ENCODE measurements at regions of chr12 and their contacts with region 1.

Region 1: GRCh38 chr12:53675651-53676453 is at the start of gene ATP5MC2:
- DNase-seq: peak; percentile 98
- H3K4me3 Mint-ChIP-seq: peak within 1 kb of the TSS; percentile 81
- H3K27ac Mint-ChIP-seq: peak within 1 kb of the TSS; percentile 89
- H3K4me1 Mint-ChIP-seq: peaks cover 26% of the 10 kb centered on the region
- H3K27me3 Mint-ChIP-seq: peaks cover 19% of the 10 kb centered on the region
- total RNA-seq, gene ATP5MC2: 378 TPM

Region 2: DNA sequence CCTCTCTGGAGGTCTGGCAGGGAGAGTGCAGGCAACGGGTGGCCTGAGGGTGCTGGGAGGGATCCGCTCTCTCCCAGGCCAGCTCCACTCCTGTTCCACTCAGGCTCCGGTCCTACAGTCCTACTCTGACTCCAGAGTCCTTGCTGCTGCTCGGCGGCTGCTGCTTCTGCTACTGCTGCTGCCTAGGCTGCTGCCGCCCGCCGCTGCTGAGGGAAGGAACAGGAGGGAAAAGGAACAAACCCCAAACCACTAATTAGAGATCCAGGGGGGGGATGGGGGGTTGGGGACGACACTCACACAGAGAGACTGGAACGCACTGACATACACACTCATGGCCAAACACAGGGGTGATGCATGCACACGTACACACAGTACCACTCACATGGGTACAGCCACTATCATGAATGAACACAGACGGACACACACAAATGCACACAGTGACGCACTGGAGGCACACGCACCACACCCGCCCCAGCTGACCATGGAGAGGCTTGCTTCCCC is 339.6 kb before region 1 on chr12 and contains the start of gene SP7:
- CTCF ChIA-PET with region 1: no interaction called
- POLR2A ChIA-PET with region 1: no interaction called
- intact Hi-C with region 1: no loop called
- DNase-seq: no peak
- H3K4me3 Mint-ChIP-seq: no peak within 1 kb of the TSS
- H3K27ac Mint-ChIP-seq: no peak within 1 kb of the TSS
- H3K4me1 Mint-ChIP-seq: peaks cover 5% of the 10 kb centered on the region
- H3K27me3 Mint-ChIP-seq: peaks cover 32% of the 10 kb centered on the region
- total RNA-seq, gene SP7: not detected

Region 3: DNA sequence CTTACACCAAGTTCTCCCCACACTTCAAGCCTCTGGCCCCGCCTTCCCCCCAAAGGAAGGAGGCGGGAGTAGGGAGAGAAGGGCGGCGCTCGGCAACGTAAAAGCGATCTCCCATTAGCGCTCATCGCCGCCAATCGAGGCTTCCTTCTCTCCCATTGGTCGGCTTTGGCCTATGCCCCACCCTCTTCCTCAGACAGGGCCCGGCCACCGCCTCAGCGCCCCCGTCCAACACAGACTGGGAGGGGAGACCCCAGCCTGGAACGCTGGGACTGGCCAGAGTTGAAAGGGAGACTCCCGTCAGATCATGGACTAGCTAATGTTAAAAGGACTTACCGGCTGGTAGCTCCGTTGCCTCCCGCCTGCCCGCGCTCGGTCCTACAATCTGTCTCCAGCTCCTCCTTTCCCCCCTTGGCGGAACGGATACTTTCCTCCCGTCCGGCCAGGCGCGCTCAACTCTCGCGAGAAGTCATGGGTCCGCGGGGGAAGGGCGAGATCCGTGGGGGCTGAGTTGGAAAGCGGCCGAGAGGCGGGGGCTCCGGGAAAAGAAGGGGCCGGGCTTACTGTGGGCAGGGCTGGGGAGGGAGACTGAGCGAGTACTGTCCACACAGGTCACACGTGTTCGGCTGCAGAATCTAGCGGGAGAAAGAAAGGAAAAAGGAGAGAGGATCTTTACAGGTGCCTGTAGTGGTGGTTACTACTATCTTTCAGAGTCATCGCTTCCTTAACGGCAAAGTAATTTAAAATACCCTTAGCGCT is 49.7 kb before region 1 on chr12 and contains the start of gene ATF7:
- CTCF ChIA-PET with region 1: interaction called, 17 read pairs
- POLR2A ChIA-PET with region 1: interaction called, 3 read pairs
- intact Hi-C with region 1: loop called (anchors 1 kb)
- DNase-seq: peak; percentile 99
- H3K4me3 Mint-ChIP-seq: peak within 1 kb of the TSS; percentile 97
- H3K27ac Mint-ChIP-seq: peak within 1 kb of the TSS; percentile 94
- H3K4me1 Mint-ChIP-seq: peaks cover 43% of the 10 kb centered on the region
- H3K27me3 Mint-ChIP-seq: no peaks in the 10 kb centered on the region
- total RNA-seq, gene ATF7: 19.3 to 20.7 TPM

Region 4: DNA sequence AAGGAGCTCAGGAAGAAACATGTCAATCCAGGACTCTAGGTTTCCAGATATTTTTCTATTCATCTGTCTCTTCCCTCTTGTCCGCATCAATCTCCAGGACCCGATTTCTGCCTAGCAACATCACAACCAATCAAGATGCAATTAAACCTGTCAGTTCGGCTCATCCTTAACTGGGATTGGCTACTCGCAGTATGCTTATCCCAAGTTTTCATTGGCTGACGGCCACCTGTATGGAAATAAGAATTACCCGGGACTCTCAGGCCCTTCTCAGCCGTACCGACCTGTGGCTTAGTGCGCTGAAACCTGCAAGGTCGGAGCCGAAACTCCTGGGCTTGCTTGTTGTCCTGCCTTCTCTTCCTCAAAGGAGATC is 20.4 kb after region 1 on chr12:
- CTCF ChIA-PET with region 1: interaction called, 17 read pairs
- POLR2A ChIA-PET with region 1: no interaction called
- intact Hi-C with region 1: no loop called
- DNase-seq: no peak
- H3K4me3 Mint-ChIP-seq: peak overlapping the region; percentile 16
- H3K27ac Mint-ChIP-seq: no peak overlapping the region
- H3K4me1 Mint-ChIP-seq: peaks cover 29% of the 10 kb centered on the region
- H3K27me3 Mint-ChIP-seq: peaks cover 75% of the 10 kb centered on the region

Region 5: DNA sequence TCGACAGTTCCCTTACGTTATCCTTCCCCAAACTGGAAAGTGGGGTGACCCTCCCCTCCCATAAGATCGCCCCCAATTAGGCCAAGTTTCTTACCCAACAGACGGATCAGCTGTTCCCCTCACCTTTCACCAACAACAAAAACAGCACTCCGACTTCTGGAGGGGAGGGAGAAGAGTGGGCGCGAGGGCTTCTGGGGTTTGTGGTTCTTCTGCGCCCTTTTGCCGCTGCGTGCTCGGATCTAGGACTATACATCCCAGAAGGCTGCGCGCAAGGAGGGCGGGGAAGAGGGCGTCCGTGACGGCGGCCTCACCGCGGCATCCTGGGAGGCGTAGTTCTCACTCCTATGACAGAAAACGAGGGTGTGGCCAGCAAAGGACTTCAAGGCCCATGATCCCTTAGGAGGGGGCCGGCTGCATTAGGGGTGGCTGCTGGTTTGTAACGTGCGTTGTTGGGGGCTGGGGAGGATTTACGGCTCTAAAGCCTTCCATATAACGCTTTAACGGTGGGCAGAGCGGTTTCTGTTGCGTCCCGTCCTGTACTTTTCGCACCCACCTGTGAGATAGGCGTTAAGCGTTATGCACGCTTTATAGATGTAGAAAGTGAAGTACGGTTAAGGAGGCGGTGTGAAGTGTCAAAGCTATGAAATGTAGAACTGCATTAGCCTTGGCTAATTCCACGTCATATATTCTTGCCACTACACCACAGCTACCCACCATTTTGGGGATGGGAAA is 51.6 kb after region 1 on chr12 and contains the start of gene CALCOCO1:
- CTCF ChIA-PET with region 1: interaction called, 4 read pairs
- POLR2A ChIA-PET with region 1: interaction called, 10 read pairs
- intact Hi-C with region 1: loop called (anchors 1 kb)
- DNase-seq: peak; percentile 99
- H3K4me3 Mint-ChIP-seq: peak within 1 kb of the TSS; percentile 87
- H3K27ac Mint-ChIP-seq: peak within 1 kb of the TSS; percentile 77
- H3K4me1 Mint-ChIP-seq: peaks cover 19% of the 10 kb centered on the region
- H3K27me3 Mint-ChIP-seq: no peaks in the 10 kb centered on the region
- total RNA-seq, gene CALCOCO1: 21.2 to 23.7 TPM

Region 6: GRCh38 chr12:53766881-53767280 is 91.0 kb after region 1 on chr12:
- CTCF ChIA-PET with region 1: no interaction called
- POLR2A ChIA-PET with region 1: no interaction called
- intact Hi-C with region 1: no loop called
- DNase-seq: no peak
- H3K4me3 Mint-ChIP-seq: no peak overlapping the region
- H3K27ac Mint-ChIP-seq: no peak overlapping the region
- H3K4me1 Mint-ChIP-seq: no peaks in the 10 kb centered on the region
- H3K27me3 Mint-ChIP-seq: peaks cover 49% of the 10 kb centered on the region

Region 7: DNA sequence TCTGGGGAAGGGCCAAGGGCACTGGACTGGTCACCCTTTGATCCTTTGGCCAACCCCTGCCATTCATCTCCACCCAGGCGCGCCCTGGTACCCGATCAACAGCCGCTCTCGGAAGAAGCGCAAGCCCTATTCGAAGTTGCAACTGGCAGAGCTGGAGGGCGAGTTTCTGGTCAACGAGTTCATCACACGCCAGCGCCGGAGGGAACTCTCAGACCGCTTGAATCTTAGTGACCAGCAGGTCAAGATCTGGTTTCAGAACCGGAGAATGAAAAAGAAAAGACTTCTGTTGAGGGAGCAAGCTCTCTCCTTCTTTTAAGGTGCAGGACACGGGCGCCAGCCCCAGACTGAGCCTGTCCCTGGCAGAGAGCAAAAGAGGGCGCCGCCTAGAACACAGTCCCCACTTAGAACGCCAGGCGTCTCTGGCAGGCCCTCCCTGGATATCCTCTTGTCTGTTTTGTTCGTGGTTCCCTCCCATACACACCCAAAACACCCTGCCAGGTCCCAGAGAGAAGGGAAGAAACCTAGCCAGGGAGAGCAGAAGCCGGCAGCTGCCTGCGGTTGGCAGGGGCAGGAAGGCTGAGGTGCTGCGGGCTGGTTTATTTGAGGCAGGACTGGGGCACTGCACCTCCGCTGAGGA is 280.5 kb after region 1 on chr12:
- CTCF ChIA-PET with region 1: no interaction called
- POLR2A ChIA-PET with region 1: no interaction called
- intact Hi-C with region 1: no loop called
- DNase-seq: no peak
- H3K4me3 Mint-ChIP-seq: no peak overlapping the region
- H3K27ac Mint-ChIP-seq: no peak overlapping the region
- H3K4me1 Mint-ChIP-seq: peaks cover 20% of the 10 kb centered on the region
- H3K27me3 Mint-ChIP-seq: peaks cover 80% of the 10 kb centered on the region

Measured in activated CD4-positive, alpha-beta memory T cell treated with anti-CD3 and anti-CD28 coated beads for 36 hours (primary cell).